Activated T-helper 1 cell treated with anti-CD3 and anti-CD28 coated beads, Interleukin-12 subunit alpha, Interleukin-12 subunit beta, Interleukin-2, Interleukin-4 antibody, amounts not matched to agents 30 ng/mL and 10 ng/mL and 1 ng/mL, durations not matched to agents 14 hours and 24 hours and 36 hours (primary cell): ENCODE measurements at regions of chr1 and their contacts with region 1.

Region 1: GRCh38 chr1:200866521-200866920 is 6.3 kb upstream of the GPR25 start:
- DNase-seq: no peak
- H3K4me3 Mint-ChIP-seq: no peak overlapping the region
- H3K27ac Mint-ChIP-seq: no peak overlapping the region
- H3K4me1 Mint-ChIP-seq: peaks cover 41% of the 10 kb centered on the region
- H3K27me3 Mint-ChIP-seq: peaks cover 37% of the 10 kb centered on the region

Region 2: GRCh38 chr1:200877839-200878551 is 11.5 kb after region 1 on chr1:
- intact Hi-C with region 1: loop called (anchors 1 kb)
- DNase-seq: no peak
- H3K4me3 Mint-ChIP-seq: no peak overlapping the region
- H3K27ac Mint-ChIP-seq: no peak overlapping the region
- H3K4me1 Mint-ChIP-seq: peaks cover 8% of the 10 kb centered on the region
- H3K27me3 Mint-ChIP-seq: peaks cover 52% of the 10 kb centered on the region

Region 3: GRCh38 chr1:201006450-201006849 is 139.9 kb after region 1 on chr1:
- intact Hi-C with region 1: no loop called
- DNase-seq: no peak
- H3K4me3 Mint-ChIP-seq: no peak overlapping the region
- H3K27ac Mint-ChIP-seq: no peak overlapping the region
- H3K4me1 Mint-ChIP-seq: peaks cover 12% of the 10 kb centered on the region
- H3K27me3 Mint-ChIP-seq: no peaks in the 10 kb centered on the region